Ovary (tissue), 10 donors: ENCODE measurements at regions of chr10 and their contacts with region 1.

Region 1: DNA sequence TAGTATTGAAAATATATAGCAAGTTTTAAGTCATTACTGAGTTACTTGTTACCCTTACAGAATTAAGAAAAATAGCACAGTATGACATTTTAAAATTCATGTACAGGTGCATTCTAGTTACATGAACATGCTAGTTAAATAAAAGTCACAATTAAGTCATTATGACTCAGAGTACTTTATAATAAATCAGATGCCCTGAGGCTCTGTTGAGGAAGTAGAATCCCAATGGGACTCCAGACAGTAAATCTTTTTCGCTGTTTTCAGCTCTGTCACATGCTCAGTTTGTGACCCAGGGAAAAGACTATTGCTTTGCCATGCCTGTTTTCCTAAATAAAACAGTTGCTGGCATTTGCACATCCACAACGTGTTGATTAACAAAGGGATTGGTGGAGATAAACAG is 21.0 kb downstream of the NUDT13 start:
- DNase-seq: no peak
- H3K4me3 ChIP-seq: no peak overlapping the region
- H3K27ac ChIP-seq: no peak overlapping the region
- H3K4me1 ChIP-seq: no peaks in the 10 kb centered on the region
- H3K27me3 ChIP-seq: no peaks in the 10 kb centered on the region
- CTCF ChIP-seq: no peak
- EP300 ChIP-seq: no peak
- POLR2A ChIP-seq: no peak

Region 2: GRCh38 chr10:72186258-72186981 is 944.9 kb before region 1 on chr10:
- intact Hi-C with region 1: no loop called
- DNase-seq: no peak
- H3K4me3 ChIP-seq: no peak overlapping the region
- H3K27ac ChIP-seq: peak overlapping the region in 1 of 2 donors; percentile 29
- H3K4me1 ChIP-seq: no peaks in the 10 kb centered on the region
- H3K27me3 ChIP-seq: no peaks in the 10 kb centered on the region
- CTCF ChIP-seq: no peak
- EP300 ChIP-seq: no peak
- POLR2A ChIP-seq: no peak

Region 3: DNA sequence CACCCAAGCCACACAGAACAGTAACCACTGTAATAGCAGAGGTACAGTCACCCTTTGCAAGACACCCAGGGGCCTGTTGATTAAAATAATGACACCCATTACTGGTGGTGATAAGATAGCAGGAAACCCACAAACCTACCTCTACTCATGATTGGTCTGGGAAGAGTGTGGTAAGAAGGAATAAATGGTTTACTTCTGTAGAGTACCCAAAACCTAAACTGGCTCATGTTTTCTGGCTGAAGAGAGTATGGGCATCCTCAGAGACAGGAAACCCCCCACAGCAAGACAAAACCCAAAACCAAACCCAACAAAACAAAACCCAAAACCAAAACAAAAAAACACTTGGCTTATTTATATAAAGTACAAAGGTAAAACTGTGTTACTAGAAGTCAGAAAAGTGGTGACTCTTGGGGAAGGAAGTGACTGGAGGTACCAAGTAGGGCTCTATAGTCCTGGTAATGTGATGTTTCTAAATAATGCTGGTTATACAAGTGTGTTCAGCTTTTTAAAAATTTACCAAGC is 761.0 kb before region 1 on chr10:
- intact Hi-C with region 1: loop called in 1 of 4 experiments (anchors 5 kb)
- DNase-seq: no peak
- H3K4me3 ChIP-seq: no peak overlapping the region
- H3K27ac ChIP-seq: no peak overlapping the region
- H3K4me1 ChIP-seq: no peaks in the 10 kb centered on the region
- H3K27me3 ChIP-seq: no peaks in the 10 kb centered on the region
- CTCF ChIP-seq: no peak
- EP300 ChIP-seq: no peak
- POLR2A ChIP-seq: no peak

Region 4: DNA sequence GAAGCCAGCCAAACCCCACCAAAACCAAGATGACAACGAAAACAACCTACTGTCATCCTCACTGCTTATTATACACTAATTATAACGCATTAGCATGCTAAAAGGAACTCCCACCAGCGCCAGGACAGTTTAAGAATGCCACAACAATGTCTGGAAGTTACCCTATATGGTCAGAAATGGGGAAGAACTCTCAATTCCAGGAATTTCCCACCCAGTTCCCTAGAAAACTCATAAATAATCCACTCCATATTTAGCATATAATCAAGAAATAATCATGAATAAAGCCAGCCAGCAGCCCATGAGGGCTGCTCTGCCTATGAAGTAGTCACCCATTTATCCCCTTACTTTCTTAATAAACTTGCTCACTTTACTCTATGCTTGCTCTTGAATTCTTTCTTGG is 526.2 kb before region 1 on chr10:
- intact Hi-C with region 1: no loop called
- DNase-seq: no peak
- H3K4me3 ChIP-seq: no peak overlapping the region
- H3K27ac ChIP-seq: no peak overlapping the region
- H3K4me1 ChIP-seq: peaks cover 1% of the 10 kb centered on the region
- H3K27me3 ChIP-seq: no peaks in the 10 kb centered on the region
- CTCF ChIP-seq: no peak
- EP300 ChIP-seq: no peak
- POLR2A ChIP-seq: no peak

Region 5: DNA sequence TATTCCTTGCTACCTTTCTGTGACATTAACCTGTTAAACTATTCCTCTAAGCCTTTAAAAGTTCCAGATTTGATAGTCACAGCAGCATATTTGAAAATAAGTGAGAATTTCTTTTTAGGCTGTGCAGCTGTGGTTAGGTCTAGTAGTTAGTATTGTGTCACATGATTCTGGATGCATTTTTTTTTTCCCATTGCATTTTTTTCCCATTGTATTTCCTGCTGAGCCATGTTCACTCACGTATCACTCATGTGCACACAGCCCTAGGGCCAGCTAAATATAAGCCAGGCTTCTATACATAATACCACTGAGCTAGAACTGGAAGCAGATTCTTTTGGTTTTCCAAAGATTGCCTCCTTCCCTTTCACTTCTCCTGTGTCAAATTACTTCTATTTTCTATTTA is 78.4 kb after region 1 on chr10:
- intact Hi-C with region 1: no loop called
- DNase-seq: no peak
- H3K4me3 ChIP-seq: no peak overlapping the region
- H3K27ac ChIP-seq: no peak overlapping the region
- H3K4me1 ChIP-seq: no peaks in the 10 kb centered on the region
- H3K27me3 ChIP-seq: no peaks in the 10 kb centered on the region
- CTCF ChIP-seq: no peak
- EP300 ChIP-seq: no peak
- POLR2A ChIP-seq: no peak